A673 (cell line): ENCODE measurements at regions of chr20 and their contacts with region 1.

Region 1: GRCh38 chr20:8853805-8854338 is 215.0 kb upstream of the PLCB4 start:
- DNase-seq: peak; percentile 83
- H3K4me3 ChIP-seq: peak overlapping the region; percentile 26
- H3K27ac ChIP-seq: peak overlapping the region; percentile 48
- H3K4me1 ChIP-seq: peaks cover 17% of the 10 kb centered on the region
- H3K27me3 ChIP-seq: no peaks in the 10 kb centered on the region
- CTCF ChIP-seq: peak; percentile 86

Region 2: GRCh38 chr20:9068851-9069663 is 215.2 kb after region 1 on chr20 and contains the start of gene PLCB4:
- CTCF ChIA-PET with region 1: interaction called, 8 read pairs
- POLR2A ChIA-PET with region 1: no interaction called
- intact Hi-C with region 1: loop called (anchors 5 kb)
- DNase-seq: peak; percentile 56
- H3K4me3 ChIP-seq: peak within 1 kb of the TSS; percentile 63
- H3K27ac ChIP-seq: peak within 1 kb of the TSS; percentile 37
- H3K4me1 ChIP-seq: peaks cover 6% of the 10 kb centered on the region
- H3K27me3 ChIP-seq: no peaks in the 10 kb centered on the region
- CTCF ChIP-seq: no peak
- total RNA-seq, gene PLCB4: 4.7 and 6.2 TPM in 2 replicates

Region 3: GRCh38 chr20:9215539-9215938 is 361.7 kb after region 1 on chr20:
- CTCF ChIA-PET with region 1: interaction called, 4 read pairs
- POLR2A ChIA-PET with region 1: no interaction called
- intact Hi-C with region 1: loop called (anchors 5 kb)
- DNase-seq: peak; percentile 51
- H3K4me3 ChIP-seq: no peak overlapping the region
- H3K27ac ChIP-seq: no peak overlapping the region
- H3K4me1 ChIP-seq: peaks cover 8% of the 10 kb centered on the region
- H3K27me3 ChIP-seq: no peaks in the 10 kb centered on the region
- CTCF ChIP-seq: peak; percentile 70

Region 4: GRCh38 chr20:9280666-9281065 is 426.8 kb after region 1 on chr20:
- CTCF ChIA-PET with region 1: no interaction called
- POLR2A ChIA-PET with region 1: no interaction called
- intact Hi-C with region 1: loop called (anchors 5 kb)
- DNase-seq: peak; percentile 33
- H3K4me3 ChIP-seq: no peak overlapping the region
- H3K27ac ChIP-seq: no peak overlapping the region
- H3K4me1 ChIP-seq: peaks cover 9% of the 10 kb centered on the region
- H3K27me3 ChIP-seq: no peaks in the 10 kb centered on the region
- CTCF ChIP-seq: no peak

Region 5: DNA sequence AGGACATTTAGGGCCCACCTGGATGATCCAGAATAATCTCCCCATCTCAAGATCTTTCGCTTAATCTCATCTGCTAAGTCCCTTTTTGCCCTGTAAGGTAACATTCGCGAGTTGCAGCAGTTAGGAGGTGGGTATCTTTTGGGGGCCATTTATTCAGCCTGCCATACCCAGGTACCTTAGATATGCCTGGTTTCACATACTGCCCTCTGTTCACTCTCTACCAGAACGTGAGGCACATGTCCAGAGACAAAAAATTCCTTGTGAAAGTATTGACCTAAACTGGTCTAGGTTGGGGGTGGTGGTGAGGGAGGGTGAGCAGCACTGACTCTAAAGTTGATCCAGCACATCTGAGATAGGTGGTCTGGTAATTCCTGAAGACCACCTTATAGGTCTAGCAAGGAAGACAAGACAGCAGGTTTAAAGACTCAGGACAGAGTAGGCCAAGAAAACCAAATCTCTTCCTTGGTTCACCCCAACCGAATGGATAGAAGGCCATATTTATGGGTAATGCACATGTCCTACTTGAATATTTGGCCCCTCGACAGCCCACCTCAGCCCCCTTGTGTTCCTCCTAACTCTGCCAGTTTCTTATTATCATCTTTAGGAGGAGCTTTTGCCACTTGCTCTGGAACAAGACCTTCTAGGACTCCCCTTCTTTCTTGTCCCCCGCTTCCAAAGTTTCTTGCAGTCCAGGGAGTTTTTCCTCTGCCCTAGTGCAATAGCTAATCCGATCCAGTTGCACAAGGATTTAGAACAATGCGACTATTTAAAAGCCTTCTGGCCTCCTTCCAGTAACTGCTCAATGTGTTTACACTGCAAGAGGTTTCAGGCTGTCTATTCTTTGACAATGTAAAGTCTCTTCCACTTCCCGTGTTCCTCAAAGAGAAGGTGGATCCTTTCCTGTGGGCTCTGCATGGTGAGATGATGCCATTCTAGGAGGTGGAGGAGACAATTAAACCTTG is 447.5 kb after region 1 on chr20:
- CTCF ChIA-PET with region 1: no interaction called
- POLR2A ChIA-PET with region 1: no interaction called
- intact Hi-C with region 1: no loop called
- DNase-seq: peak; percentile 66
- H3K4me3 ChIP-seq: no peak overlapping the region
- H3K27ac ChIP-seq: no peak overlapping the region
- H3K4me1 ChIP-seq: peaks cover 6% of the 10 kb centered on the region
- H3K27me3 ChIP-seq: no peaks in the 10 kb centered on the region
- CTCF ChIP-seq: no peak

Region 6: GRCh38 chr20:9359561-9360308 is 505.9 kb after region 1 on chr20:
- CTCF ChIA-PET with region 1: interaction called, 4 read pairs
- POLR2A ChIA-PET with region 1: no interaction called
- intact Hi-C with region 1: loop called (anchors 2 kb)
- DNase-seq: peak; percentile 66
- H3K4me3 ChIP-seq: no peak overlapping the region
- H3K27ac ChIP-seq: no peak overlapping the region
- H3K4me1 ChIP-seq: no peaks in the 10 kb centered on the region
- H3K27me3 ChIP-seq: no peaks in the 10 kb centered on the region
- CTCF ChIP-seq: peak; percentile 58

Region 7: GRCh38 chr20:9392892-9393857 is 539.3 kb after region 1 on chr20:
- CTCF ChIA-PET with region 1: interaction called, 14 read pairs
- POLR2A ChIA-PET with region 1: no interaction called
- intact Hi-C with region 1: loop called (anchors 1 kb)
- DNase-seq: peak; percentile 81
- H3K4me3 ChIP-seq: no peak overlapping the region
- H3K27ac ChIP-seq: no peak overlapping the region
- H3K4me1 ChIP-seq: no peaks in the 10 kb centered on the region
- H3K27me3 ChIP-seq: no peaks in the 10 kb centered on the region
- CTCF ChIP-seq: peak; percentile 79